Cardiac septum (tissue), 1 donor: ENCODE measurements at regions of chr11 and their contacts with region 1.

Region 1: GRCh38 chr11:123246749-123247495 is 51.9 kb upstream of the CLMP start:
- DNase-seq: peak; percentile 80

Region 2: GRCh38 chr11:122007601-122008071 is 1239.3 kb before region 1 on chr11:
- intact Hi-C with region 1: no loop called
- DNase-seq: no peak

Region 3: GRCh38 chr11:123110356-123110755 is 136.6 kb before region 1 on chr11:
- intact Hi-C with region 1: loop called (anchors 2 kb)
- DNase-seq: no peak

Region 4: DNA sequence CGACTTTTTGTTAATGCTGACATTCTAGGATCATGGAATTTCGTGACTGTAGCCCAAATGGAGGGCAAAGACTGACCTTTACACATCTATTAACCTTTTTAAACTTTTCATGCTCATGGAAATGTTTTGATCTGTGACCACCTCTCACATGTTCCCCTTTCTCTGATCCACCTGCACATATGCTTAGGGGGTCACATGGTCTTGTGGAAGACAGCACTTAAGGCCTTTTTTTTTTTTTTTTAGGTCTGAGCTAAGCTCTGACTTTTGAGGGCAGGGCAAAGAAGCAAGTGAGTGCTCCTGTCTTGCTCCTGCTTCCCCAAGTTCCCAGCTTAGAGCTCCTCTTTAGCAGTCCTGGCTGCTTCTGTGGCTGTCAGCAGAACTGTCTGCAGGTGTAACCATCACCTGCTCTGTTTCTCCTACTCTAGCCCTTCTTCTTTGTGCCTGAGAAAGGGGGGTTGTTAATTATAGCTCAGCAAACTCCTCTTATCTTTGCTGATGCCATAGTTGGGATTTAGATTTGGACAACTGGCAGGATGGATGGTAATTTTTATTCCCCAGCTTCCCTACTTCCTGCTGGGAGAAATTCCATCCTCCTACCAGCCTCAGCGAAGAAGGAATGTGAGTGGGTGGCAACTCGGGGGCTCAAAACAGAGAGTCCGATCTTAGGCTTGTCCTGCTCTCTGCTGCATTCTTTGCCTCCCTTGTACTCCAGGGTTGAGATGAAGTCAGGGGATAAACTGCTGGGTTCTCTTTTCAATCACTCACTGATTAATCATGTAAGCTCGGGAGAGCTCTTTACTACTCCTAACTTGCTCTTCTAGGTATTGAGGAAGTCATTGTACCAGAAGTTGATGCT is 247.5 kb after region 1 on chr11:
- intact Hi-C with region 1: no loop called
- DNase-seq: no peak